ENCODE measurements at regions of chr13 and their contacts with region 1.

Region 1: DNA sequence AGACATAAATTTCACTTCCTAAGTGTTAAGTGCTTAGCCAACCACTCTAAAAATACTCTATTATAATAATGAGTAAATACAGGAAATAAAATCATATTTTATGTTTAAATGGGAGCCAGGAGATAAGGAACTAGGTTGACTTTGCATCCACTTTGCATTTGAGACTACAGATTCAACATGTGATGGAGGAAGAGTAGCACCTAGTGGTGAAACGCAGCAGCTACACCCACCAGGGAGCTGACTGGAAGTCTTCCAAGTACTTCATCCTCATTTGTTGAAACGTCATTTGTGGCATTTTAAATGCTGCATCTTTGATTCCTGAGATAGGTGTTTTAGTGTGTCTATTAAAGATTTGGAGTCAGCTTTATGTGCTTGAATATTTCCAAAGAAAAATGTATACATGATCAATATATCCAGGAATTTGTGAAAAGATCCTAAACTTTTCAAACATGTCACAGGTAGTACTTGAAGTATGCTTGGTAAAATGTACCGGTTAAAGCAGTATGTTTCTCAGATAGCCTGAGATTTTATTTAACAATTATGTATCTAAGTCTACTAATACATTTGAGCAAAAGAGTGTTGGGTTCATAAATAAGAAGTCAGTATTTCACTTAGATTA is 17.4 kb upstream of the KCTD12 start:
- DNase-seq: peak; percentile 60 to 68 (median 64)
- H3K4me3 ChIP-seq: no peak overlapping the region
- H3K4me3 Mint-ChIP-seq: no peak overlapping the region
- H3K27ac ChIP-seq: no peak overlapping the region
- H3K27ac Mint-ChIP-seq: no peak overlapping the region
- H3K4me1 ChIP-seq: no peaks in the 10 kb centered on the region
- H3K4me1 Mint-ChIP-seq: no peaks in the 10 kb centered on the region
- H3K27me3 ChIP-seq: no peaks in the 10 kb centered on the region
- H3K27me3 Mint-ChIP-seq: peaks cover 10 to 12% of the 10 kb centered on the region in 2 donors

Region 2: DNA sequence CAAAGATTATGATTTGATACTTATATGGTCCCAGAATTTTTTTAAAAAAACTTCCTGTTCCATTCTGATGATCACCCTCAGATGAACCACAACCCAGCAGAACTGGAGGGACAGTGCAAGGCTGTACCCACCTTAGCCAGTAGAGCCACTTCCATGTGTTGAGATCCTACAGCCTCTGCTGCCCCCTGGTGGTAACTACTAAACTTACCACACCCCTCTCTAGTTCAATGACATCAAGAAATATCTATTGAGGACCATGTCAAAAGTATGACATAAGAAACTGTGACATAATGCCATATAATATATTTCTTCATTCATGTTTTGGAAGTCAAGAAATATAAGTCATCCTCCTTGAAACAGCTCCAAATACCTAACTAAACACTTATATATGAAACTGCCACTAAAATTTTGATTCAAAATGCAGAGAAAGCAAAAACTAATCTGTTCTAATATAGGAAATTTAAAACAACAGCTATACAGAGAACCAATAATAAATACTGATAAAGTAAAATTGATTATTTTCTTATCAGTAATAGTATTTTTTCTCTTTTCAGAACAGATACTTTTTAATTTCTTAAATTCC is 430.0 kb before region 1 on chr13:
- CTCF ChIA-PET with region 1: interaction called, 3 read pairs
- POLR2A ChIA-PET with region 1: no interaction called
- intact Hi-C with region 1: loop called (anchors 1 kb)
- DNase-seq: peak; percentile 61 to 67 (median 66)
- H3K4me3 ChIP-seq: no peak overlapping the region
- H3K4me3 Mint-ChIP-seq: no peak overlapping the region
- H3K27ac ChIP-seq: no peak overlapping the region
- H3K27ac Mint-ChIP-seq: no peak overlapping the region
- H3K4me1 ChIP-seq: no peaks in the 10 kb centered on the region
- H3K4me1 Mint-ChIP-seq: no peaks in the 10 kb centered on the region
- H3K27me3 ChIP-seq: no peaks in the 10 kb centered on the region
- H3K27me3 Mint-ChIP-seq: peaks cover 0 to 6% of the 10 kb centered on the region in 2 donors

Region 3: DNA sequence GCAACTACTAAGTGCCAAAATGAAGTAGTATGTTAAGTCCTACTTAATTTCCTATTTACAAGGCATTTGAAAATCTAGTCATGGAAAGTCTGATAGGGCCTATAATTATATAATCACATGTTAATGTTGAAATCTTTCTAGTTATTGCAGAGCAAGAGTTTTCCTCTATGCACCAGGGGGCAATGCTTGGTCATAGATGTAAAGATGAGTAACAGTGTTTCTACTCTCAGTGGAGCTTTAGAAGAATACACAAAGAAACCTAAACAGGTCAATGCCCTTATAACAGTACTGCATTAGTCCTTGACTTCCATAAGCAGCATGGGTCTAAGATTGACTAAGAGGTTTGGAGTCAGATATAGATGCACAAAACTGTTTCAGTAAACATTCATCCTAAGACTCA is 236.1 kb before region 1 on chr13:
- CTCF ChIA-PET with region 1: interaction called, 9 read pairs
- POLR2A ChIA-PET with region 1: no interaction called
- intact Hi-C with region 1: loop called (anchors 1 kb)
- DNase-seq: peak in 1 of 5 donors; percentile 9
- H3K4me3 ChIP-seq: no peak overlapping the region
- H3K4me3 Mint-ChIP-seq: no peak overlapping the region
- H3K27ac ChIP-seq: no peak overlapping the region
- H3K27ac Mint-ChIP-seq: no peak overlapping the region
- H3K4me1 ChIP-seq: no peaks in the 10 kb centered on the region
- H3K4me1 Mint-ChIP-seq: no peaks in the 10 kb centered on the region
- H3K27me3 ChIP-seq: no peaks in the 10 kb centered on the region
- H3K27me3 Mint-ChIP-seq: peaks cover 0 to 6% of the 10 kb centered on the region in 2 donors

Region 4: GRCh38 chr13:76687467-76687866 is 216.2 kb before region 1 on chr13:
- CTCF ChIA-PET with region 1: no interaction called
- POLR2A ChIA-PET with region 1: no interaction called
- intact Hi-C with region 1: no loop called
- DNase-seq: no peak
- H3K4me3 ChIP-seq: no peak overlapping the region
- H3K4me3 Mint-ChIP-seq: no peak overlapping the region
- H3K27ac ChIP-seq: no peak overlapping the region
- H3K27ac Mint-ChIP-seq: no peak overlapping the region
- H3K4me1 ChIP-seq: no peaks in the 10 kb centered on the region
- H3K4me1 Mint-ChIP-seq: no peaks in the 10 kb centered on the region
- H3K27me3 ChIP-seq: no peaks in the 10 kb centered on the region
- H3K27me3 Mint-ChIP-seq: peaks cover 0 to 5% of the 10 kb centered on the region in 2 donors

Region 5: GRCh38 chr13:76822698-76823267 is 80.9 kb before region 1 on chr13:
- CTCF ChIA-PET with region 1: interaction called, 17 read pairs
- POLR2A ChIA-PET with region 1: no interaction called
- intact Hi-C with region 1: loop called (anchors 1 kb)
- DNase-seq: peak in 3 of 5 donors; percentile 3 to 29 (median 15)
- H3K4me3 ChIP-seq: no peak overlapping the region
- H3K4me3 Mint-ChIP-seq: no peak overlapping the region
- H3K27ac ChIP-seq: no peak overlapping the region
- H3K27ac Mint-ChIP-seq: no peak overlapping the region
- H3K4me1 ChIP-seq: no peaks in the 10 kb centered on the region
- H3K4me1 Mint-ChIP-seq: no peaks in the 10 kb centered on the region
- H3K27me3 ChIP-seq: no peaks in the 10 kb centered on the region
- H3K27me3 Mint-ChIP-seq: peaks cover 4 to 9% of the 10 kb centered on the region in 2 donors

Region 6: DNA sequence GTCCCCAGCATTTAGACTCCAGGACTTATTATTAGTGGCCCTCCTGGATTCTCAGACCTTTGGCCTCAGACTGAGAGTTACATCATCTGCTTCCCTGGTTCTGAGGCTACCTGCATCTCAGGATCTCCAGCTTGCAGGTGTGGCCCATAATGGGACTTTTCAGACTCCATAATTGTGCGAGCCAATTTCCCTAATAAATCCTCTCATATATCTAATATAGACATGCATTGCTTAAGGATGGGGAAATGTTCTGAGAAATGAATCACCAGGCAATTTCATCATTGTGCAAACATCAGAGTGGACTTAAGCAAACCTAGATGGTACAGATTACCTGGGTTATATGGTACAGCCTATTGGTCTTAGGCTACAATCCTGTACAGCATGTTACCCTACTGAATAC is 239.8 kb after region 1 on chr13:
- CTCF ChIA-PET with region 1: no interaction called
- POLR2A ChIA-PET with region 1: no interaction called
- intact Hi-C with region 1: no loop called
- DNase-seq: no peak
- H3K4me3 ChIP-seq: no peak overlapping the region
- H3K4me3 Mint-ChIP-seq: no peak overlapping the region
- H3K27ac ChIP-seq: no peak overlapping the region
- H3K27ac Mint-ChIP-seq: no peak overlapping the region
- H3K4me1 ChIP-seq: no peaks in the 10 kb centered on the region
- H3K4me1 Mint-ChIP-seq: peaks cover 0 to 4% (median 2%) of the 10 kb centered on the region in 4 donors
- H3K27me3 ChIP-seq: no peaks in the 10 kb centered on the region
- H3K27me3 Mint-ChIP-seq: no peaks in the 10 kb centered on the region